PC-9 (cell line): ENCODE measurements at regions of chr3 and their contacts with region 1.

Region 1: DNA sequence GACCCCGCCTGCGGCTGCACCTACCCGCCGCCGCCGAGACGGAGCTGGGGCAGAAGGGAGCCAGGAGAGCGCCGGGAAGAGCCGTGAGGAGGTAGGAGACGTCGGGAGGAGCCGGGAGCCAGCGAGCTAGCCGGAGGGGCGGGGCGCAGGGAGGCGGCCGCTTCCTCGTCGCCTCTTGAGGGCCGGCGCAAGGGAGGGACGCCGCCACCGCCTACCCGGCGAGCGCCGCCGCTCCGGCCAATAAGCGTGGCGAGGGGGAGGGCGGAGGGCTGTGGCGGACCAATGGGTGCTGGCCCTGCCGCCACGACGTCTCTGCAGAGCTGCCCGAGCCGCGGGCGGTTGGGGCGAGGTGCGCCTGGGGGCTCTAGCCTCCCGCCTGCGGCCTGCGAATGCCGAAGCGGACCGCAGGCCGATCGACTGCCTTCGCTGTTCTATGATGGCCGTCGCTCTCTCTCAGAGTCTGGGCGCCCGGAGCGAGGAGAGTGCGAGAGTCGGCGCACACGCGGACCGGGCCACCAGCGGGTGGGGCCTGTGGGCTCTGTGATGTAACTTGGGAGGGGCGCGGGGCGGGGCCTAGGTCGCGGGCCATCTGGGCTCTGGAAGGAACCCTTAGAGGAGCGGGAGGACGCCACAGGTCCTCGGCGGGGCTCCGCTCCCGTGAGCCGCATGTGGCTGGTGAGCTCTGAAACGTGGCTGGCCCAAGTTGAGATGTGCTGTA is 72.7 kb upstream of the MAP4 start:
- DNase-seq: peak; percentile 88 to 97
- H3K4me3 ChIP-seq: peak overlapping the region; percentile 73
- H3K27ac ChIP-seq: peak overlapping the region; percentile 90
- H3K4me1 ChIP-seq: peaks cover 24% of the 10 kb centered on the region
- H3K27me3 ChIP-seq: no peaks in the 10 kb centered on the region
- CTCF ChIP-seq: 0 out of 2 replicates have a peak, but pooled peaks have one; percentile 3

Region 2: GRCh38 chr3:47989981-47990440 is 98.9 kb before region 1 on chr3:
- CTCF ChIA-PET with region 1: no interaction called
- POLR2A ChIA-PET with region 1: no interaction called
- intact Hi-C with region 1: loop called (anchors 5 kb)
- DNase-seq: peak; percentile 69 to 78
- H3K4me3 ChIP-seq: no peak overlapping the region
- H3K27ac ChIP-seq: no peak overlapping the region
- H3K4me1 ChIP-seq: peaks cover 6% of the 10 kb centered on the region
- H3K27me3 ChIP-seq: no peaks in the 10 kb centered on the region
- CTCF ChIP-seq: peak; percentile 84

Region 3: GRCh38 chr3:48013288-48013980 is 75.5 kb before region 1 on chr3:
- CTCF ChIA-PET with region 1: interaction called, 4 read pairs
- POLR2A ChIA-PET with region 1: interaction called, 18 read pairs
- intact Hi-C with region 1: loop called (anchors 5 kb)
- DNase-seq: peak in 1 of 2 experiments; percentile 65
- H3K4me3 ChIP-seq: no peak overlapping the region
- H3K27ac ChIP-seq: peak overlapping the region; percentile 34
- H3K4me1 ChIP-seq: peaks cover 29% of the 10 kb centered on the region
- H3K27me3 ChIP-seq: no peaks in the 10 kb centered on the region
- CTCF ChIP-seq: no peak

Region 4: GRCh38 chr3:48018841-48019240 is 70.1 kb before region 1 on chr3:
- CTCF ChIA-PET with region 1: no interaction called
- POLR2A ChIA-PET with region 1: interaction called, 18 read pairs
- intact Hi-C with region 1: loop called (anchors 5 kb)
- DNase-seq: peak in 1 of 2 experiments; percentile 77
- H3K4me3 ChIP-seq: no peak overlapping the region
- H3K27ac ChIP-seq: peak overlapping the region; percentile 50
- H3K4me1 ChIP-seq: peaks cover 27% of the 10 kb centered on the region
- H3K27me3 ChIP-seq: no peaks in the 10 kb centered on the region
- CTCF ChIP-seq: no peak

Region 5: GRCh38 chr3:48034000-48034516 is 54.9 kb before region 1 on chr3:
- CTCF ChIA-PET with region 1: no interaction called
- POLR2A ChIA-PET with region 1: no interaction called
- intact Hi-C with region 1: loop called (anchors 5 kb)
- DNase-seq: peak in 1 of 2 experiments; percentile 89
- H3K4me3 ChIP-seq: no peak overlapping the region
- H3K27ac ChIP-seq: peak overlapping the region; percentile 64
- H3K4me1 ChIP-seq: peaks cover 24% of the 10 kb centered on the region
- H3K27me3 ChIP-seq: no peaks in the 10 kb centered on the region
- CTCF ChIP-seq: no peak